ENCODE measurements at regions of chr6 and their contacts with region 1.

Region 1: GRCh38 chr6:99618649-99619408 is 12.2 kb downstream of the PRDM13 start:
- DNase-seq: no peak
- ATAC-seq: no peak
- H3K4me3 Mint-ChIP-seq: no peak overlapping the region
- H3K27ac Mint-ChIP-seq: no peak overlapping the region
- H3K4me1 Mint-ChIP-seq: peaks cover 9% of the 10 kb centered on the region
- H3K27me3 Mint-ChIP-seq: peaks cover 68% of the 10 kb centered on the region

Region 2: GRCh38 chr6:99603421-99604165 is 15.2 kb before region 1 on chr6:
- CTCF ChIA-PET with region 1: no interaction called
- POLR2A ChIA-PET with region 1: interaction called, 6 read pairs
- intact Hi-C with region 1: loop called in 1 of 2 experiments (anchors 2 kb)
- DNase-seq: peak; percentile 56
- ATAC-seq: peak; percentile 51
- H3K4me3 Mint-ChIP-seq: peak overlapping the region; percentile 51
- H3K27ac Mint-ChIP-seq: no peak overlapping the region
- H3K4me1 Mint-ChIP-seq: peaks cover 30% of the 10 kb centered on the region
- H3K27me3 Mint-ChIP-seq: peaks cover 79% of the 10 kb centered on the region